ENCODE measurements at regions of chr12 and their contacts with region 1.

Region 1: DNA sequence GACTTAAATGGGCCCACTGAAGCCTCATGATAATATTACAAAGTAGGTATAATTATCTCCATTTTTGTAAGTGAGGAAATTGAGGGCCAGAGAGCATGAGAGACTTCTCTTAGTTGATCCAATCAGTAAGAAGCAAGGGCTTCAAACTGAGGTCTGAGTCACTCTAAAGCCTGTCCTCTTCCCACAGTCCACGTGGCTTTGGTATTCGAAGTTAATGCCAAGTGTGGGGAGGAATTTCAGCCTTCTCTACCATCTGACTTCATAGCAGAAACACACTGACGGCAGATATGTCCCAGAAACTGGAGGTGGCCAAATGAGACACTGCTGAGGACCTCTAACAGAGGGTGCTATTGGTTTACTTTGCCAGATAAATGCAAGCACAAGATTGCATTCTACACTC is 114.4 kb upstream of the OVCH1 start:
- DNase-seq: no peak
- ATAC-seq: no peak
- H3K4me3 ChIP-seq: no peak overlapping the region
- H3K27ac ChIP-seq: no peak overlapping the region
- H3K4me1 ChIP-seq: no peaks in the 10 kb centered on the region
- H3K27me3 ChIP-seq: no peaks in the 10 kb centered on the region
- CTCF ChIP-seq: no peak
- EP300 ChIP-seq: no peak
- POLR2A ChIP-seq: no peak
- RAD21 ChIP-seq: no peak

Region 2: DNA sequence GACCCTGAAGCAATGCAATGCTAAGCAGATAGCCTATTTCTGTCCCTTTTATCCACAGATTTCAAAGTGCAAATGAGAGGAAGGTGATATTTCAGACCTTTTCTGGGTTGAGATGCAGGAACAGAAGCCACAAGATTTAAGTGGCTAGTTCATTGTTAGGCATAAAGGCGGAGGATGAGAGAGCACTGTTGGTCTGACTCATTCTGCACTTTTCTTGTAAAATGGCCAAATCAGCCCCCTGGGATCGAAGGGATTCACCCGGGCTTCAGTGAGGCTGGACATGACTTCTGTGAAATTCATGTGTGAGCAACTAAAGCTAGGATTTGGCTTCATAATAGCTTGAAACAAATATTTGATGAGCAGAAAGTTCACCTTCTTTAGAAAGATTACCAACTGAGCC is 12.5 kb before region 1 on chr12:
- CTCF ChIA-PET with region 1: interaction called, 4 read pairs
- POLR2A ChIA-PET with region 1: interaction called, 6 read pairs
- RAD21 ChIA-PET with region 1: interaction called, 3 read pairs
- SMC1A ChIA-PET with region 1: interaction called, 29 read pairs
- in situ Hi-C with region 1: no loop called
- intact Hi-C with region 1: no loop called
- DNase-seq: no peak
- ATAC-seq: peak; percentile 54
- H3K4me3 ChIP-seq: no peak overlapping the region
- H3K27ac ChIP-seq: no peak overlapping the region
- H3K4me1 ChIP-seq: no peaks in the 10 kb centered on the region
- H3K27me3 ChIP-seq: no peaks in the 10 kb centered on the region; a peak in 1 of 4 replicates
- CTCF ChIP-seq: no peak
- EP300 ChIP-seq: no peak
- POLR2A ChIP-seq: no peak
- RAD21 ChIP-seq: no peak